Heart right ventricle (tissue), 16 donors: ENCODE measurements at regions of chr2 and their contacts with region 1.

Region 1: DNA sequence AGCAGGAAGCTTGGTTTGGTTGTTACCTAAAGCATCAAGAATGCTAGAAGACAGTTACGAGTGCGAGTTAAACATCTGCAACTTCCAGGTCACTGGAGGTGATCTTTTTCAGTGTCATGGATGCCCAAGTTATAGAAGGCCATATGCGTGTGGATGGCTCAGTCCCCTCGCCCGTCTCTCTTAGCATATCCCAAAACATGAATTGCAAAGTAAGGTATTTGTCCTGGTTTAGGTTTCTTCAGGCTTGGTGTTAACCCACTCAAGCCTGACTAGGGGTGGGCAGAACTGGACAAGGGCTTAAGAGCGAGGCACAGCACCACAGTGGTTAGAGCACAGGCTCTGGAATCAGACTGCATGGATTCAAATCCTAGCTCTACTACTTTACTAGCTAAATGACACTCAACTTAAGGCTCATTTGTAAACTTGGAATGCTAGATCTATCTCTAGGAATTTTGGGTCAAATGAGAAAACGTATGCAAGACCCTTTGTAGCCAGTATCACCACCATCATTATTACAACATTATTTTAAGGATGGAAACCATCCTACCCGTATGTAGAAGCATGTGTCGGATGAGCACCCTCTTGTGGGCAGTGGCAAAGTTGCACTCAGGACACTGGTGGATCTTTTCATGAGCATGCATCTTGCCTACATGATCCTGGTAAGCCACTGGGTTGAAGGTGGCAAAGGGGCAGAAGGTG is 11.2 kb downstream of the ZNF142 start:
- DNase-seq: peak in 1 of 2 donors; percentile 46
- ATAC-seq: peak; percentile 35 to 72 (median 69)
- H3K4me3 ChIP-seq: no peak overlapping the region
- H3K27ac ChIP-seq: no peak overlapping the region
- H3K4me1 ChIP-seq: peaks cover 0 to 4% (median 0%) of the 10 kb centered on the region in 9 donors
- H3K27me3 ChIP-seq: no peaks in the 10 kb centered on the region
- CTCF ChIP-seq: peak; percentile 52 to 86 (median 77)

Region 2: GRCh38 chr2:218418717-218419458 is 229.3 kb before region 1 on chr2 and contains the start of gene VIL1:
- intact Hi-C with region 1: loop called in 2 of 10 experiments (anchors 10 kb)
- DNase-seq: no peak
- ATAC-seq: peak in 1 of 8 donors; percentile 20
- H3K4me3 ChIP-seq: no peak within 1 kb of the TSS
- H3K27ac ChIP-seq: no peak within 1 kb of the TSS
- H3K4me1 ChIP-seq: no peaks in the 10 kb centered on the region
- H3K27me3 ChIP-seq: no peaks in the 10 kb centered on the region
- CTCF ChIP-seq: no peak
- total RNA-seq, gene VIL1: not detected

Region 3: DNA sequence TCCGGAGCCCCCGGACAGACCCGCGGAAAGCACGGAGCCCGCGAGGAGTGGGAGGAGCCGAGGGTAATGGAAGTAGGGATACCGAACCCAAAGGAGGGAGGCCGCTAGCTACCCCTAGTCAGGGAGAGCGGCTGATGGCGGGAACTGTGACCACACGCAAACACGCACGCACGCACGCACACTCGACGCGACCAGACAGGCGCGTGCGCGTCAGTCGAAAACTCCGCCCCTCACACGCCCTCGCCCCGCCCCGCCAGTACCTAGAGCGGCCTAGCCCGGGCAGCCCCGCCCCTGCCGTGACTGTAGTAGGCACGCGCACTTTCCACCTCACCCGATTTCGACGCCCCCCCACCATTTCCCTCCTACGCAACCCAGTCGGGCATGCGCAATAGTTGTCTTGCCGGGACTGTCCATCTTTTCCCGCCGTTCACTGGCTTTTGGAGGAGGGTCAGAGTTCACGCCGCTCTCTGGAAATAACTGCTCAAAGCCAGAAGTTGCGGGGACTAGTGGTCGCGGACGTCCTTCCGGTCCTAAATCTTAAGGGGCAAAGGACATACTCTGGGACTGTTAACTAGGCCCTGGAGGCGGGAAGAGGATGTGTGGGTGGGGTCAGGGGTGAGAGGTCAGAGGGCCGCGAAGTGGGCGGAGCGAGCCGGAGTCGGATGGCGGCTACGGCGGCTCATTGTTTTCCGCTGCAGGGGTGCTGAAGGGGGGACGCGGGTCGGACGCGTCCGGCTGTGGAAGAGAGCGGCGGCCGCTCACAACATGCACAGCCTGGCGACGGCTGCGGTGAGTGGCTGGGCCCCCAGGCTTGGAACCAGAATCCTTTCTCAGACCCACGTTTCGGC is 79.8 kb before region 1 on chr2 and contains the starts of genes CNOT9 and USP37:
- intact Hi-C with region 1: loop called in 2 of 10 experiments (anchors 10 kb)
- DNase-seq: peak; percentile 100
- ATAC-seq: peak; percentile 97 to 99 (median 98)
- H3K4me3 ChIP-seq: peak within 1 kb of the TSS; percentile 61 to 96 (median 84)
- H3K27ac ChIP-seq: peak within 1 kb of the TSS; percentile 68 to 97 (median 94)
- H3K4me1 ChIP-seq: peaks cover 8 to 49% (median 45%) of the 10 kb centered on the region in 9 donors
- H3K27me3 ChIP-seq: no peaks in the 10 kb centered on the region
- CTCF ChIP-seq: no peak
- total RNA-seq, gene CNOT9: 15.7 to 28.2 (median 21.1) TPM
- total RNA-seq, gene USP37: 6.3 to 11.1 (median 8.5) TPM

Region 4: GRCh38 chr2:218585541-218585940 is 62.7 kb before region 1 on chr2:
- intact Hi-C with region 1: loop called in 2 of 10 experiments (anchors 5 kb)
- DNase-seq: no peak
- ATAC-seq: no peak
- H3K4me3 ChIP-seq: no peak overlapping the region
- H3K27ac ChIP-seq: no peak overlapping the region
- H3K4me1 ChIP-seq: no peaks in the 10 kb centered on the region
- H3K27me3 ChIP-seq: no peaks in the 10 kb centered on the region
- CTCF ChIP-seq: no peak